ENCODE measurements at regions of chr19 and their contacts with region 1.

Region 1: GRCh38 chr19:58154679-58155648 is 4.4 kb upstream of the ZNF329 start:
- DNase-seq: peak; percentile 95 to 99 (median 98)
- ATAC-seq: peak; percentile 97
- H3K4me3 ChIP-seq: peak overlapping the region; percentile 69 to 76
- H3K27ac ChIP-seq: peak overlapping the region; percentile 84 to 93
- H3K4me1 ChIP-seq: peaks cover 7 to 16% of the 10 kb centered on the region in 2 donors
- H3K27me3 ChIP-seq: no peaks in the 10 kb centered on the region
- CTCF ChIP-seq: peak; percentile 92 to 97

Region 2: GRCh38 chr19:58021541-58022282 is 133.3 kb before region 1 on chr19:
- intact Hi-C with region 1: loop called (anchors 10 kb)
- DNase-seq: peak in 2 of 4 donors; percentile 73 to 89
- ATAC-seq: peak; percentile 90
- H3K4me3 ChIP-seq: no peak overlapping the region
- H3K27ac ChIP-seq: no peak overlapping the region
- H3K4me1 ChIP-seq: no peaks in the 10 kb centered on the region
- H3K27me3 ChIP-seq: peaks cover 0 to 10% of the 10 kb centered on the region in 2 donors
- CTCF ChIP-seq: peak; percentile 58